Activated CD4-positive, alpha-beta memory T cell treated with anti-CD3 and anti-CD28 coated beads for 36 hours (primary cell): ENCODE measurements at regions of chr4 and their contacts with region 1.

Region 1: DNA sequence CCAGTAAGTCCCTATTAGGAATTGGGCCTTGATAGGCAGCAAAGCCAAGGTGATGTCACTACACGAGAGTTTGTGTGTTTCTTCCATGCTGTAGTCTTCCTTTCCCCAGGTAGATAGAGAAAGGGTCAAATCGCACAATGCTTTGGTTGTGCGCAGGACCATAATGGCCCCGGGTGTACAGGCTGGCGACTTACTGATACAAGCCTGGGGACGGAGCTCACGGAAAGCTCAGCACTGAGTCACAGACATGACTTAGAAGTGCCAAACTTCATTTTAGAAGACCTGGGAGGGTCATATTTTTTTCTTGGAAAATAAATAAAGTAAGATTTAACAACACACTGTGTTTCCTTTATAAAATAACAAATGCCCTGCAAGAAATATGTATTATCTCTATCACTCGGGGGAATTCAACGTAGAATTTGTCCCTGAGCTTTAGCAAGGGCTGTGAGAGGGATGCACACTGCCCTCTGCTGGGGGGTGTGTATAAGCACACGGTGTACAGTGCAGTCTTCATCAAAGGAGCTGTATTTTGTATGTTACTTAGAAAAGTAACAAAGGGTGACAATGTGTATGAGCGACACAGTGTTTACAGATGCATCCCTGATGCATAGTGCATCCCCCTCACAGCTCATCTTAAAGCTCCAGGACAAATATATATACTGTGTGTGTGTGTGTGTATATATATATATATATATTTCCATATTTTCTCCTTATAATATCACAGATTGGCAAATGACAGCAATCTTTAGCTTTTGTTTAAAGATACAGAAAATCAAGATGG is 254.5 kb upstream of the VEGFC start:
- DNase-seq: peak; percentile 59
- H3K4me3 Mint-ChIP-seq: no peak overlapping the region
- H3K27ac Mint-ChIP-seq: no peak overlapping the region
- H3K4me1 Mint-ChIP-seq: no peaks in the 10 kb centered on the region
- H3K27me3 Mint-ChIP-seq: peaks cover 3% of the 10 kb centered on the region

Region 2: GRCh38 chr4:176034499-176034898 is 1012.8 kb before region 1 on chr4:
- CTCF ChIA-PET with region 1: interaction called, 5 read pairs
- POLR2A ChIA-PET with region 1: no interaction called
- intact Hi-C with region 1: loop called (anchors 5 kb)
- DNase-seq: no peak
- H3K4me3 Mint-ChIP-seq: no peak overlapping the region
- H3K27ac Mint-ChIP-seq: no peak overlapping the region
- H3K4me1 Mint-ChIP-seq: no peaks in the 10 kb centered on the region
- H3K27me3 Mint-ChIP-seq: no peaks in the 10 kb centered on the region

Region 3: GRCh38 chr4:176653401-176654220 is 393.6 kb before region 1 on chr4:
- CTCF ChIA-PET with region 1: no interaction called
- POLR2A ChIA-PET with region 1: no interaction called
- intact Hi-C with region 1: loop called (anchors 10 kb)
- DNase-seq: no peak
- H3K4me3 Mint-ChIP-seq: no peak overlapping the region
- H3K27ac Mint-ChIP-seq: no peak overlapping the region
- H3K4me1 Mint-ChIP-seq: no peaks in the 10 kb centered on the region
- H3K27me3 Mint-ChIP-seq: no peaks in the 10 kb centered on the region

Region 4: GRCh38 chr4:176874721-176875445 is 172.4 kb before region 1 on chr4:
- CTCF ChIA-PET with region 1: no interaction called
- POLR2A ChIA-PET with region 1: no interaction called
- intact Hi-C with region 1: no loop called
- DNase-seq: no peak
- H3K4me3 Mint-ChIP-seq: no peak overlapping the region
- H3K27ac Mint-ChIP-seq: no peak overlapping the region
- H3K4me1 Mint-ChIP-seq: no peaks in the 10 kb centered on the region
- H3K27me3 Mint-ChIP-seq: no peaks in the 10 kb centered on the region

Region 5: DNA sequence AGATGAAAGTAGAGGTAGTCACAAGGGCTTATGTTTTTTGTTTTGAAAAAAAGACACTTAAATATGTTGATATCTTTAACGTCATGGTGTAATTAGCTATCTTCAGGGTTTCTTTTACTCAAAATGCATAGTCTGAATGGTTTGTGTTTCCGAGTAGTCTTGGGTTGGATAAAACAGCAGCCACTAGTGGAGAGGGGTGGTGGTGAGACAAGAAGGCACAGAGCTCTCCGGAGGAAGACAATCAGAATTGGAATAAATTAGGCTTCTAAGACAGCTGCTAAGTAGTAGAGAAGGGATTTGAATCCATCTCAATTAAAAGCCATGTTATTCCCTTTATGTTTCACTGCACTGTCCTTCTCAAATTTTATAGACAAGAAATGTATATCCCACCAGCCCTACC is 14.1 kb before region 1 on chr4:
- CTCF ChIA-PET with region 1: interaction called, 11 read pairs
- POLR2A ChIA-PET with region 1: no interaction called
- intact Hi-C with region 1: no loop called
- DNase-seq: no peak
- H3K4me3 Mint-ChIP-seq: no peak overlapping the region
- H3K27ac Mint-ChIP-seq: no peak overlapping the region
- H3K4me1 Mint-ChIP-seq: no peaks in the 10 kb centered on the region
- H3K27me3 Mint-ChIP-seq: peaks cover 3% of the 10 kb centered on the region